ENCODE measurements at regions of chr2 and their contacts with region 1.

Region 1: GRCh38 chr2:164841719-164842623 is at the start of gene COBLL1:
- DNase-seq: peak; percentile 82
- ATAC-seq: peak; percentile 87
- total RNA-seq, gene COBLL1: 12.1 TPM

Region 2: DNA sequence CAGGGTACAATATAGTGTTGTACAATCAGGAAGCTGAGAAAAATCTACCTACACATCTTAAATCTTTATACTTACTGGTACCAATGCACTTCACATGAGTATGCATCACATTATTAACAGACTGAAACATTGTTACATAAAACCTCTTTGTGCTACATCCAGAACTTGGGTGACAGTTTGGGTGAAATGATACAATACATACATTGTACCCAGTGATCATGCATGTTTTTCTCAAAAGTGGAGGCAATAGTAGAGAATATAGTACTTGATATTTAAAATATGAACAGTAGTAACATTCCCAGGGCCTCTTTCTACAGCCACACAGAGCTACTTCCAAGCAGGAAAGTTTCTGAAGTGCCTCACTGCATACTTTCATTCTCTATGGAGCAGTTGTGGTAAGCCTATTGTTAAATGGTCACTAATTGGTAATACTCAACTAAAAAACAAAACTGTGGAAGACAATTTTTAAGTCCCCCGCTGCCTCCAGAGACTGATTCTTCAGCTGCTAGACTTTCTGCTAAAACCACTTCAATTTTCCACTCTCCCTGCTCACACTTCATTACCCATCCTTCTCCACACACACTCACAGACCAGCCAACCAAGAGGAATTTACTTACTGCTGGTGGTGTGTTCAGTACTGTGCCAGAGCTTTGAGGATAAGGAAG is 197.8 kb before region 1 on chr2:
- intact Hi-C with region 1: no loop called
- DNase-seq: no peak
- ATAC-seq: no peak

Region 3: DNA sequence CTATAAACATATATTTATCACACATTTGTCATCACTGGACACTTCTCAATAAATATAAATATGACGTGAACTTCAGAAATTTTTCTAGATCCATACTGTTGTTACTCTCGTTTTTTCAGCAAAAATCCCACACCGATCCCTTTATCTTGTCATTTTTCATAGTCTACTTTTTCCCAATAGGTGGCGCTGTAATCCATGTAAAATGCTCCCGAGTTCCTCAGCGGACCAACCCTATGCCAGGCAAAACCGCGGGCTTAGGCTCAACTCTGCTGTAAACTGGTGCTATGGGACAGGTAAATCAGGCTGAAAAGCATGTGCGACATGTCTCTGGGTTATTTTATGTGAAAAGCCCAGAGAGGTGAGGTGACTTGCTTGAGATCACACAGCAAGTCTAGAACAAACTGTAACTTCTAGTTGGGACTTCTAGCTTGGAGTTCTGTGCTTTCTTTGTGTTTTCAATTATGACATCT is 104.3 kb before region 1 on chr2:
- intact Hi-C with region 1: loop called (anchors 5 kb)
- DNase-seq: peak; percentile 65
- ATAC-seq: peak; percentile 91